ENCODE measurements at regions of chr11 and their contacts with region 1.

Region 1: DNA sequence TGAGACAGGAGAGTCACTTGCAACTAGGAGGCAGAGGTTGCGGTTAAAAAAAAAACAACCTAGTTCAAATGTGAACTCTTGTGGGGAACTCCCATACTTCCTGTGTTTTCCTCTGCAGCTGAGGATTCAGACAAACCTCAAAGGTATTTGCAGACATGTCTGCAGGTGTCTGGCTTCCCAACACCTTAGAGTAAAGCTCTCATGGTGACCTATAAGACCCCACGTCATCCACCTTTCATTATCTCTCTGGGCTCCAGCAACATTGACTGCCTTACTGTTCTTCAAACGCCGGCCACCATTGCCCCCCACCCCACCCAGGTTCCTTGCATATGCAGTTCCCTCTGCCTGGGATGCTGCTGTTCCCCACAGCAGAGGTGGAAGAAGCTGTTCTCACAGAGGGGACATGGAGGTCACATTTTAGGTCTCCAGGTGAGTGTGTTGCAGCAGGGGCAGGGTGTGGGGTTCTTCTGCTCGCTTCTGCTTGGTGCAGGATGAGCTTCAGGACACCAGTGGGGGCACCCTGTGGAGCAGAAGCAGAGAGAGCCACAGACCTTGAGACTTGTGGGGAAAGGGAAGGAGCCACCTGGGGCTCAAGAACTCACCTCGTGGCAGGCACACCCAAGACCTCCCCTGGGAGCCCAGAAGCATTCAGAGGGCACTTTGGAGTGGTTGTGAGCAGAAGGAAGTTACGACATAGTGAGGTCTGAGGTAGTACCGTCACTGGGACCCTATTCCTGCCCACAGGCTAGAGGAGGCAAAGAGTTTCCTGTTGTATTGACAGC is 203.2 kb downstream of the CSNK2A3 start:
- DNase-seq: no peak
- H3K4me3 ChIP-seq: no peak overlapping the region
- H3K27ac ChIP-seq: no peak overlapping the region
- H3K4me1 ChIP-seq: peaks cover 5 to 10% of the 10 kb centered on the region in 2 donors
- H3K27me3 ChIP-seq: no peaks in the 10 kb centered on the region
- CTCF ChIP-seq: no peak
- POLR2A ChIP-seq: no peak

Region 2: DNA sequence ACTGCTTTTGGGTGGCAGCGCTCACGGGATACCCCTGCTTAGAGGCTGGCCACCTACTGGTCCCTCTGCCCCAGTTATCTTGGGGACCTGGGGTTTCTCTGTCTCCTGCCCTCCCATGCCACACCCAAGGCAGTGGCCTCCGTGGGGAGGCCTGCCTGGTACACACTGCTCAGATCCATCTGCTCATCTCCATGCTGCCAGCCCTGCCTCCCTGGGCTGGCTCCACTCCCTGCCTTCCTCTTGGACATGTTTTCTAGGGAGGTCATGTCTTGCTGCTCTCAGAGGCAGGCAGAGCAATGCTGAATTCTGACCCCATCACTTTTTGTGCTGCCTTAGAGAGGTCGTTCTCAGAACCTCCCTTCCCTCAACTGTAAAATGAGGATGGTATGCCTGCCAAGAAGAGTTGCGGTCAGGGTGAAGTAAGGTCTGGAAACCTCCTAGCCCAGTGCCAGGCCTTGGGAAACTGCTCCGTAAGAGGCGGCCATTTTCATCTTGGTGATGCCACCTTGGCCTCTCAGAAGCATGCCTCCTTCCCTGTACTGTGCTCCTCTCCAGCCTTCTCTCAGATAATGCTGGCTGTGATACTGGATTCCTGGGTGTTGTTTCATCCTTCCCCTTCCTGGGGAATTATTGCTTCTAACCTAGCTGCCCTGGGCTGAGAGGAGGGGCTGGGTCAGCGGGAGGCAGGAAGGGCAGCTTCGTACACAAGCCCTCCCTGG is 105.6 kb before region 1 on chr11:
- intact Hi-C with region 1: loop called (anchors 5 kb)
- DNase-seq: no peak
- H3K4me3 ChIP-seq: no peak overlapping the region
- H3K27ac ChIP-seq: no peak overlapping the region
- H3K4me1 ChIP-seq: peaks cover 4 to 5% of the 10 kb centered on the region in 2 donors
- H3K27me3 ChIP-seq: no peaks in the 10 kb centered on the region
- CTCF ChIP-seq: no peak
- POLR2A ChIP-seq: no peak

Region 3: DNA sequence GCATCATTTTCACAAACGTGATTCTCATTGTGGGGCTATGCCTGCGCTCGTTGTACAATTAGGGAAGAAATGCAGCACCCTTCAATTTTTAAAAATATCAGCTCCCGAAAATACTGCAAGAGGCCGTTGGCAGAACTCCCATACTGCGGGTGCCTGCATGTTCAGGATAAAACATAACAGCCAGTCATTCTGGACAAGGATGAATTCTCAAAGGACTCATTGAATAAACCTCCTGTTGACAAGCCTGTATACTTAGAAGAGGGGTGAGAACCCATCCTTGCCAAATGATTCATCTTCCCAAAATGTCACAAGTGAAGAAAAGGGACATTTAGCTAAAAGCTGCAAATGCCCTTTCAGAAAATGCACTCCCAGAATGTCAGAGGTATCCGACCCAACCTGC is 61.3 kb after region 1 on chr11:
- intact Hi-C with region 1: no loop called
- DNase-seq: peak; percentile 63 to 68
- H3K4me3 ChIP-seq: no peak overlapping the region
- H3K27ac ChIP-seq: peak overlapping the region; percentile 17 to 54 (median 25)
- H3K4me1 ChIP-seq: peaks cover 26 to 41% of the 10 kb centered on the region in 2 donors
- H3K27me3 ChIP-seq: no peaks in the 10 kb centered on the region
- CTCF ChIP-seq: no peak
- POLR2A ChIP-seq: no peak

Measured in thyroid gland (tissue), 4 donors.